Adrenal gland (tissue), 19 donors: ENCODE measurements at regions of chr6 and their contacts with region 1.

Region 1: GRCh38 chr6:16409531-16410441 is 171.4 kb downstream of the GMPR start:
- DNase-seq: peak; percentile 62 to 89 (median 72)
- H3K4me3 ChIP-seq: peak overlapping the region in 1 of 4 donors; percentile 23
- H3K27ac ChIP-seq: no peak overlapping the region
- H3K4me1 ChIP-seq: peaks cover 0 to 5% of the 10 kb centered on the region in 2 donors
- H3K27me3 ChIP-seq: no peaks in the 10 kb centered on the region
- CTCF ChIP-seq: peak; percentile 71 to 90 (median 78)
- POLR2A ChIP-seq: no peak

Region 2: DNA sequence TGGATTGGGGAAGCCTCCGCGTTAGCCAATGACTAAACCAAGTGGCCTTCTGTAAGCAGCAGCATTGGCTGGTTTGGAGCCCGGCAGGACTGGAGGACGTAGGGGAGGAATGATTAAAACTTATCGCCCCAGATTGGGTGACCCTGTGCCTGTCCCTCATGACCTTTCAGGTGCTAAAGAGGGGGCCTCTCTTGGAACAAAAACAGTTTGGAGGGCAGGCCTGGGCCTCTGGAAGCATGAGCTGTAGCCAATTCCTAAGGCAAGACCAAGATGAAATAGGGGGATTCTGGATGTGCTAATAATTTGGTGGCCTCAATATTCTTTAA is 170.0 kb before region 1 on chr6:
- intact Hi-C with region 1: loop called in 1 of 2 experiments (anchors 10 kb)
- DNase-seq: peak in 6 of 7 donors; percentile 87 to 93 (median 90)
- H3K4me3 ChIP-seq: peak overlapping the region in 1 of 4 donors; percentile 80
- H3K27ac ChIP-seq: peak overlapping the region in 4 of 5 donors; percentile 69 to 95 (median 78)
- H3K4me1 ChIP-seq: peaks cover 5 to 33% of the 10 kb centered on the region in 2 donors
- H3K27me3 ChIP-seq: no peaks in the 10 kb centered on the region
- CTCF ChIP-seq: no peak
- POLR2A ChIP-seq: no peak

Region 3: DNA sequence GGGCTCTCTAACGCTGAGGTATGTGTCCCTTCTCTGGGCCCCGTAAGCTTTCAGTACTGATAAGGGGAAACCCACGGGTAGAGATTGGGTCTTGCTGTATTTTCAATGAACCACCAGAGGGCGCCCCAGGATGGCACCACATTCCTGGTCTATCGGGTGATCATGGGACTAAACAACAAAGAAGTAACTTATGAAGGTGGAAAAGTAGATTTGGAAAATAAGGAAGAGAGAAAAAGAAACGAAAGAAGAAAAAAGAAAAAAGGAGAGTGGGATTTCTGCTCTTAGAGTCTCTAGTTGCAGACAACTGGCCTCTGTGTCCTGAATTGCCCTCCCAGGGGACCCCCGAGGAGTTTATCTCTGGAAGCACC is 77.6 kb before region 1 on chr6:
- intact Hi-C with region 1: loop called (anchors 5 kb)
- DNase-seq: peak; percentile 76 to 95 (median 86)
- H3K4me3 ChIP-seq: no peak overlapping the region
- H3K27ac ChIP-seq: peak overlapping the region in 4 of 5 donors; percentile 1 to 63 (median 44)
- H3K4me1 ChIP-seq: peaks cover 21 to 35% of the 10 kb centered on the region in 2 donors
- H3K27me3 ChIP-seq: no peaks in the 10 kb centered on the region
- CTCF ChIP-seq: peak; percentile 88 to 97 (median 93)
- POLR2A ChIP-seq: peak in 1 of 2 donors; percentile 33